GM13977 (cell line): ENCODE measurements at regions of chrX and their contacts with region 1.

Region 1: GRCh38 chrX:7083468-7084396 is 63.8 kb upstream of the STS start:
- DNase-seq: peak; percentile 51
- CTCF ChIP-seq: no peak

Region 2: DNA sequence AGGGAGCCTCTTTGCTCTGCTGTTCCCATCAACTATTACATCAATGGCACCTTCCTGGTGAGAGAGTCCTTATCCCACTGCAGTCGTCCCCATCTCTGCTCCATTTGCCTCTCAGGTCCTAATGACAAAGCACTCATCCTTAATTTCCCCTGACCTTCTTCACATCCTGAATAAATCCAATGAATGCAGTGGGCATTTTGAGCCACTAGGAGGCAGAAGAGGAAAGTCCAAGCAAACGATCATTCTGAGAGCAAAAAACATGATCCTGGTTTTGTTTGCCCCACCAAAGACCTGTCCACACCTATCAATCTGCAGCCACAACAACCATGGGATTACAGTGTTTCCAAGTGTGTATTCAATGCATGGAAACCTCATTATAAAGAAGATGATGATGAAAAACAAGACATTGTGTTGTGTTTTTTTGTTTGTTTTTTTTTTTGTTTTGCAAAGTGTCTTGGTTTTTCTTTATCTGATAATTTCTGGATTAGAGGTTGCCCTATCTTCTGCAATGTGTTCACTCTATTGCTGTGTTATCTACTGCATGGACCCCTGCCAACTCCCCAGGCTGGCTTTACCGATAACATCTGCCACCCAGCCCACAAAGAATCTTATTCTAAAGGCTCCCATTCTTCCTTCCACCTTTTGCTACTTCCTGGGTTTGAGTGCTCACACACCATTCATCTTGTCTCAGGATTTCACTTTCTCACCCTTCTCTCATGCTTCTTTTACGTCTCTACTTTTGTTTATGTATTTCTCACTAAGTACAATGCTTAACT is 1062.2 kb before region 1 on chrX:
- in situ Hi-C with region 1: loop called (anchors 25 kb)
- DNase-seq: peak; percentile 39
- CTCF ChIP-seq: peak; percentile 86

Region 3: DNA sequence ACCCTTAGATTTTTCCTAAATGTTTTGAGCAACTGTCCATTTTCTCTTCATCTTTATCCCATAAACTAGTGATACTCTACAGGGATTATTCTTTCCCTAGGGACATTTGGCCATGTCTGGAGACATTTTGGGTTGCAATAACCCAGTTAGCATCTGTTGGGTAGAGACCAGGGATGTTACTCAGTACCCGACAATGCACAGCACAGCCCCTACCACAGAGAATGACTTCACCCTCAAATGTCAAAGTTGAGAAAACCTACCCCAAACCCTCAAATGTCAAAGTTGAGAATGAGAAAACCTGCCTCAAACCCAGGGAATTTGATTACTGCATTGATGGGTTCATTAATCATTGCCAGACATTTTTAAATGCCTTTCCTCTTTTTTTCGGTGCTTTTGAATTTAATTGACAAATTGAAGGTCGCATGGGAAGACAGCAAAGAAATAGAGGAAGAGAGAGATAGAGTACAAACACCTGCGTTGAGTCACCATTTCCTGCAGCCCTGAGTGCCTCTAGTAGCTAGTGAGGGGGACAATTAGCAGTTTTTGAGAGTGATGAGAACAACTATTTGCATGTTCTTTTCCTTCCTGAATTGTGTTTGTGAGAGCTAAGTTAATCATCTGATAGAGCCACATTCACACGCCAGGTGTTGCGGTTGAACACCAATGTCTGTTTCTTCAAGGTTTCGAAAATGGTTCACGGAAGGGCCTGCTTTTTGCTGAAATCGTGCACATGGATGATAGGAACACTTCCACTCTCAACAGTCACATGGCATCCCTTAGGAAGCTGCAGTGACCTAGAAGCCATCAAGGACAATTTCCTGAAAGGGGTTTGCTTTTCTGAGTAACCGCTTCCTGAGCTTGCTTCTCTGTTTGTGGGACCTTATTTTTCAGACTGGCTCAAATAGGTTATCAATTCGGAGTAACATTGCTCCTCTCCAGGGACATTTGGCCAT is 344.9 kb before region 1 on chrX:
- in situ Hi-C with region 1: loop called (anchors 25 kb)
- DNase-seq: peak; percentile 34
- CTCF ChIP-seq: no peak